Posterior cingulate gyrus (tissue), 11 donors: ENCODE measurements at regions of chr4 and their contacts with region 1.

Region 1: DNA sequence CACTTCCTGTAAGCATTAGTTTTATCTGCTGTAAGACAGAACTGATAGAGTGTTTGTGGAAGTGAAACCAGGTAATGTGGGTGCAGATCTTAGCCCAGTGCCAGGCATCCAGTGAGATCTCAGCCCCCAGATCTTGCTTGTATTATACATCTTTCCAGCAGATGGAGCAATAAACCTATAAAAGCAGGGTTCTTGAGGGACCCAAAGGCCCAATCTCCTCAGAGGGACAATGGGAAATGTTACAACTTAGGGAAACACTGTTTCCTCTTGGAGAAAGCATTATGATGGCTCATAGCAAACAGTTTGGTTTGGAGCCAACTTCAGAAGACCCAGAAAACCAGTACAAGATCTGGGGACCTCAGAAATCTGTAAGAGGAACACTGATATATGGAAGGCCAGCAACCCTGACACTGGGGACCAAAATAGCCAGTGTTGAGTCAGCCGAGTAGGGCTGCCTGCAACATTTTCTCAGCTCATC is 206.3 kb downstream of the SLC7A11 start:
- DNase-seq: no peak

Region 2: GRCh38 chr4:137853435-137853834 is 182.4 kb before region 1 on chr4:
- intact Hi-C with region 1: no loop called
- DNase-seq: peak in 3 of 10 donors; percentile 60 to 77 (median 75)

Region 3: GRCh38 chr4:137981282-137981681 is 54.5 kb before region 1 on chr4:
- intact Hi-C with region 1: no loop called
- DNase-seq: no peak

Region 4: DNA sequence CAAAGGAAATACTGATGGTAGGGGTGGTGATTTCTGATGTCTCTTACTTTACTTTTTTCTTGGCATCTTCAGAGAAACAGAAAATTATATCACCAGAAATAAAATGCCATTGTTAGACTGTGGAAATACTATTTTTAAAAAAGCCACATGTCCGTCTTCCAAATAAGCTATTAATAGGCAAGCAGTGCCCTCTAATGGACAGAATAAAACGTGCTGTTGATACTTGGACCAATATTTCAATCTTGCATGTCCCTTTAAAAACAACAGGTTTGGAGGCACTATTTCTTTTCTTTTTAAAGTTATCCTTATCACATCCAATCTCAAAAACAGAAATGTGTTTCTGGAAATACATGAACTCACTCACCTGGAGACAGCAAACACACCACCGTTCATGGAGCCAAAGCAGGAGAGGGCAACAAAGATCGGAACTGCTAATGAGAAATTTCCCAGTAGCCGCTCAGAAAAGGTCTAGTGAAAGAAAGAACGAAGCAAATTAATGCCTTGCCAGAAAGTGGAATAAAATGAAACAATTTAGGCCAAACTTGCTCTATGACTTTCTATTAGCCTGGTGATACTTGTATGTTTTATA is 147.1 kb after region 1 on chr4:
- intact Hi-C with region 1: loop called (anchors 2 kb)
- DNase-seq: no peak

Region 5: GRCh38 chr4:138870737-138871554 is 835.1 kb after region 1 on chr4:
- intact Hi-C with region 1: loop called (anchors 2 kb)
- DNase-seq: peak in 9 of 10 donors; percentile 31 to 89 (median 73)